HAP-1 (cell line): ENCODE measurements at regions of chr2 and their contacts with region 1.

Region 1: DNA sequence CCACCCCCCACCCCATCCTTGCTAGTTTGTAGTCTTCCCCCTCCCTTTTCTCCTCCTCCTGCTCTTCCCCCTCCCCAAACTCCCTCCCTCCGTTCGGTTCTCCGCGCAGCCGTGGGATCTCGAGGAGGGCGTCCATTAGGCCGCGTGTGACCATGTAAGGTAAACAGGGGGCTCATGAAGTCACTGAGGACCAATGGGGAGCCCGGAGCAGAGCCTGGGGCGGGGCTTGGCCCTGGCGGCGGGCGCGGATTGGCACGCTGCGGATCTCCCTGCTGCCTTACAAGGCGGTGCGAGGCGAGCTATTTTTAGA is 246 bp upstream of the KLF7 start:
- DNase-seq: peak; percentile 98
- H3K4me3 ChIP-seq: peak overlapping the region; percentile 66
- H3K4me1 ChIP-seq: peaks cover 29% of the 10 kb centered on the region
- H3K27me3 ChIP-seq: no peaks in the 10 kb centered on the region

Region 2: DNA sequence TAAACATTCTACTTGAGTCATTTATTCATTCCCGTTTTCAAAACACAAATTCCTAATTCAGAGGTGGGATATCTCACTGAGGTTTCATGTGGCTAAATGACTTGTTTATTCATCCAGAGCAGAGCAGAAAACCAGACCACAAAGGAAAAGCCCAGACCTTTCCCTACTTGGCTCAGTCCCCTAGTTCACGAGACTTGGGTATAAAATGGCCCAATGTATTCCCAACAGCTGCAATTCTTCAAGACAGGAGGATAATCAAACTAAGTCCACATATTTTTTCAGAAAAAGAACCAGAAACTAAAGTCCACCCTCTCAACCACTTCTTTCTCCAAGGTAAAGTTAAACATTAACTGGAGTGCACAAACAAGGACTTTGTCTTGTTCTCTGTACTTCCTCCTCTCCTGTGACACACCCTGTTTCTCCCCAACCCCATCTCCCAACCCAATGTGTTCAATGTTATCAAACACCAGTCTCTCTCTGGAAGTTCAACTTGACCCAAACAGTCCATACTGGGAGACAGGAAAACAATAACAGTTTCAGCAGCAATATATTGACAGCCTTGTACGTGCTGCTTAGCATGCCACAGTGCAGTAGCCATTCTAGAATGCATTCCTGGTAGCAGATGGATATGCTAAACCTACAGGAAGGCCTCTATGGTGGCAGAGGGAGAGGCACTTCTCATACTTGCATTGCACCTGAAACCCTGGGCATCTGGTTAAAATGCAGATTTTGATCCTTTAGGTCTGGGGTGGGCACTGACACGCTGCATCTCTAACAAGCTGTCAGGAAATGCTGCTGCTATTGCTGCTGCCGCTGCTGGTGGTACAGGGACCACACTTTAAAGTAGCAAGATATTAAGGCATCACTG is 1190.7 kb before region 1 on chr2:
- in situ Hi-C with region 1: no loop called
- DNase-seq: no peak
- H3K4me3 ChIP-seq: no peak overlapping the region
- H3K4me1 ChIP-seq: no peaks in the 10 kb centered on the region
- H3K27me3 ChIP-seq: no peaks in the 10 kb centered on the region; the same call in 1 of the 2 replicates

Region 3: DNA sequence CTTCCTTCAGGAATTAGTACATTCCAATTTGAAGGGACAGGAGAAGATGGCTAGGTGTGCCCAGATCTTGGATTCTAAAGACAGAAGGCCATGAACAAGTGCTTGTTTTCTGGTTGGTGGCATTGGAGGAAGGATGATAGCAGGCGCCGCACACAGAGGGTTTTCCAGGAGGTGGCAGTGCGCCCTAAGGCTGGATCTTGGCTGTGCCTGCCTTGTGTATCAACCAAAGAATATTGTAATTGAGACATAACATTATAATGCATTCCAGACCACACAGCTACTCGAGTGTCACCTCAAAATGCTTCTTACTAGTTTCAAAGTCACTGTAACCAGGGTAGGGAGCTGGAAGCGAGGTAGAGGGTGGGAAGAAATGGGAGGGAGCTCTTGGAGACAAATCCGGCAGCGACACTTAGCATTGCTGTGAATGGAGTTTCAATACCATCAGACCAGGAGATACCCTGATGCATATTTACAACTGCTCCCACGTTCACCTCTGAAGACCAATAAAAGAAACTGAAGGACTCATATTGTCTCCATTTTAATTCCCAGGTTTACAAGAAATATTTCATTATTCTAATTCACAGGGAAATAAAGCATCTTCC is 184.2 kb before region 1 on chr2:
- in situ Hi-C with region 1: loop called (anchors 10 kb)
- DNase-seq: peak; percentile 77 to 83
- H3K4me3 ChIP-seq: no peak overlapping the region
- H3K4me1 ChIP-seq: peaks cover 23% of the 10 kb centered on the region
- H3K27me3 ChIP-seq: no peaks in the 10 kb centered on the region